GM12878 (cell line): ENCODE measurements at regions of chr3 and their contacts with region 1.

Region 1: GRCh38 chr3:158570999-158571974 is at the start of gene MLF1:
- DNase-seq: peak; percentile 42
- ATAC-seq: peak; percentile 99
- H3K4me3 ChIP-seq: peak within 1 kb of the TSS; percentile 62; the same call in 1 of the 2 replicates
- H3K27ac ChIP-seq: no peak within 1 kb of the TSS
- H3K4me1 ChIP-seq: no peaks in the 10 kb centered on the region
- H3K27me3 ChIP-seq: 0 out of 4 replicates have a peak, but pooled peaks cover 0 to 2% of the 10 kb centered on the region in 2 experiments
- CTCF ChIP-seq: no peak
- EP300 ChIP-seq: no peak
- POLR2A ChIP-seq: 0 out of 2 replicates have a peak, but pooled peaks have one; percentile 29
- RAD21 ChIP-seq: no peak
- polyA plus RNA-seq, gene MLF1: 0.39 to 0.42 TPM

Region 2: DNA sequence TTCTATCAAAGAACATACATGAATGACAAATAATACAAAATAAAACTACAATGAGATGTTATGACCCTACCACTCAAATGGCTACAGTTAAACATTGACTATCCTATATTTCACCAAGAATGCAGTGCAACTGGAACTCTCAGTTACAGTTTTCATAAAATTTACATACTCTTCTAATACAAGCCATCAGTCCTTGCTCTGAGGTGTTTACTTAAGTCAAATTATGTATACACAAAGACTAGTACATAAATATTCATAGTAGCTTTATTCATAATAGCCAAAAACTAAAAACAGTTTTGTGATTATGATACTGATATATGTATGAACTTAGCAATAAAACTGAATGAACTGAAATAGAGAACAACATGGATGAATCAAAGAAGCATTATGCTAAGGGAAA is 18.9 kb after region 1 on chr3:
- CTCF ChIA-PET with region 1: interaction called, 3 read pairs
- POLR2A ChIA-PET with region 1: no interaction called
- RAD21 ChIA-PET with region 1: no interaction called
- SMC1A ChIA-PET with region 1: interaction called, 10 read pairs
- in situ Hi-C with region 1: no loop called
- intact Hi-C with region 1: no loop called
- DNase-seq: no peak
- ATAC-seq: no peak
- H3K4me3 ChIP-seq: no peak overlapping the region
- H3K27ac ChIP-seq: no peak overlapping the region
- H3K4me1 ChIP-seq: no peaks in the 10 kb centered on the region
- H3K27me3 ChIP-seq: no peaks in the 10 kb centered on the region
- CTCF ChIP-seq: no peak
- EP300 ChIP-seq: no peak
- POLR2A ChIP-seq: no peak
- RAD21 ChIP-seq: no peak

Region 3: DNA sequence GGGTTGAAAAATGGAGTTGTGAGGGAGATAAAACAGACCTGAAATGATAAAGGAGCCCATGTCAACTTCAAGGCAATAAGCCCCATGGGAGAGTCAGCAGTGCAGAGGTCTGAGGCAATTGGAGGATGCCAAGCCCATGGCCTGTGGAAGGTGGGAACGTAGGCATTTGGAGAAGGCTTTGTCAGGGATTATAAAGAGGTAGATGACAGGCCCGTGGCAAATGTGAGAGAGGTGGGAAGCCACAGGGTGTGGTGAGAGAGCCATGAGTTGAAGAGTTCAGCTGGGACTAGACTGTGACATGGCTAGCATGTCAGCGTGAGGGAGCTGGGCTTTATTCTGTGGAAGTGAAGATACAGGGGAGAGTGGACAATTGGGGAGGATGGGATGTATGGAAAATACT is 266.0 kb after region 1 on chr3:
- CTCF ChIA-PET with region 1: no interaction called
- POLR2A ChIA-PET with region 1: no interaction called
- RAD21 ChIA-PET with region 1: no interaction called
- SMC1A ChIA-PET with region 1: no interaction called
- in situ Hi-C with region 1: no loop called
- intact Hi-C with region 1: no loop called
- DNase-seq: no peak
- ATAC-seq: no peak
- H3K4me3 ChIP-seq: no peak overlapping the region
- H3K27ac ChIP-seq: no peak overlapping the region
- H3K4me1 ChIP-seq: no peaks in the 10 kb centered on the region
- H3K27me3 ChIP-seq: no peaks in the 10 kb centered on the region
- CTCF ChIP-seq: no peak
- EP300 ChIP-seq: no peak
- POLR2A ChIP-seq: no peak
- RAD21 ChIP-seq: no peak